Testis (tissue), 5 donors: ENCODE measurements at regions of chr9 and their contacts with region 1.

Region 1: GRCh38 chr9:35116898-35117551 is 1.4 kb upstream of the ATOSB start:
- DNase-seq: peak; percentile 97
- H3K4me3 ChIP-seq: peak overlapping the region; percentile 50 to 65
- H3K27ac ChIP-seq: peak overlapping the region; percentile 69 to 94
- H3K4me1 ChIP-seq: peaks cover 29% of the 10 kb centered on the region
- H3K27me3 ChIP-seq: no peaks in the 10 kb centered on the region
- CTCF ChIP-seq: peak; percentile 79 to 89 (median 82)
- POLR2A ChIP-seq: no peak

Region 2: GRCh38 chr9:34611829-34612630 is 505.0 kb before region 1 on chr9 and contains the start of gene RPP25L:
- intact Hi-C with region 1: no loop called
- DNase-seq: peak; percentile 92
- H3K4me3 ChIP-seq: peak within 1 kb of the TSS; percentile 73 to 76
- H3K27ac ChIP-seq: peak within 1 kb of the TSS; percentile 82 to 92
- H3K4me1 ChIP-seq: peaks cover 11% of the 10 kb centered on the region
- H3K27me3 ChIP-seq: no peaks in the 10 kb centered on the region
- CTCF ChIP-seq: no peak
- POLR2A ChIP-seq: no peak
- total RNA-seq, gene RPP25L: 23.5 to 26.8 TPM

Region 3: DNA sequence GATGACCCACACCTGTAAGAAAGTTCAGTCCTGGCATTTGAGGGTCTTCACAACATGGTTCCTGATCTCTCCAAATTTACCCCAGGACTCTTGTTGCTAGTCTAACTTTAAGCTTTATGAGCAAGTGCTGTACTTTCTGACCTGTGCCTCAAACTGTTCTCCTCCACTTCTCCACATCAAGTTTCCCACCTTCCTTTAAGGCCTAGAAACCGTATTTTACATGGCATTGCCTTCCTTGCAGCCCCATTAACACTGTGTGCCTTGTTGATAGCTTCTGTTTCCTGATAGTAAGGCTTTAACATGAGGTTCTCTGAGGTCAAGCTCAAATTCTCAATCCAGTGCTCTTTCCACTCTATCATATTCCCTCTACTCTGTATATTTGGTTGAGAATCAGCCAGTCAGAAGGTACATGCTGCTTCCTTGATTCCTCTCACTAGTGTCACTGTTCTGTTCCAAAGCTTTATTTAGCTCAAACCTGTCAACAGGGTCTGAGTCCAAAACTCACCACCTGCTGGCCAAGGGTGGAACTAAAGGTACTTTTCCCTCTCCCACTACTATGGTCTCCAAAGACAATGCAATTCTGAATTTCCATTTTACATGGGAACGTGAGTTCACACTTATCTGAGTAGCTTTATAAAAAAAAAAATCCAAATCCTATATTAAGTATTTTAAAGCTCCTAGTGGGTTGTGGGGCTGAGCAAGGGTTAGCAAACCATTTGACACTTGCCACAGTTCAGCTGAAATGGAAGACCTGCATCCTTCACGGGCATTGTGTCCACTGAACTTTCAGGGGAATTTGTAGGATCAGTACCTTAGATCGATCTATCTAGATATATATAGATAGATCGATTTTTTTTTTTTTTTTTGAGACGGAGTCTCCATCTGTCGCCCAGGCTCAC is 65.7 kb before region 1 on chr9:
- intact Hi-C with region 1: no loop called
- DNase-seq: peak; percentile 65
- H3K4me3 ChIP-seq: no peak overlapping the region
- H3K27ac ChIP-seq: no peak overlapping the region
- H3K4me1 ChIP-seq: no peaks in the 10 kb centered on the region
- H3K27me3 ChIP-seq: no peaks in the 10 kb centered on the region
- CTCF ChIP-seq: peak; percentile 38 to 65 (median 64)
- POLR2A ChIP-seq: no peak

Region 4: GRCh38 chr9:35260186-35260585 is 143.2 kb after region 1 on chr9:
- intact Hi-C with region 1: loop called (anchors 5 kb)
- DNase-seq: no peak
- H3K4me3 ChIP-seq: no peak overlapping the region
- H3K27ac ChIP-seq: no peak overlapping the region
- H3K4me1 ChIP-seq: no peaks in the 10 kb centered on the region
- H3K27me3 ChIP-seq: no peaks in the 10 kb centered on the region
- CTCF ChIP-seq: no peak
- POLR2A ChIP-seq: no peak

Region 5: GRCh38 chr9:35470894-35471293 is 353.9 kb after region 1 on chr9:
- intact Hi-C with region 1: loop called (anchors 10 kb)
- DNase-seq: no peak
- H3K4me3 ChIP-seq: no peak overlapping the region
- H3K27ac ChIP-seq: no peak overlapping the region
- H3K4me1 ChIP-seq: no peaks in the 10 kb centered on the region
- H3K27me3 ChIP-seq: no peaks in the 10 kb centered on the region
- CTCF ChIP-seq: no peak
- POLR2A ChIP-seq: no peak

Region 6: DNA sequence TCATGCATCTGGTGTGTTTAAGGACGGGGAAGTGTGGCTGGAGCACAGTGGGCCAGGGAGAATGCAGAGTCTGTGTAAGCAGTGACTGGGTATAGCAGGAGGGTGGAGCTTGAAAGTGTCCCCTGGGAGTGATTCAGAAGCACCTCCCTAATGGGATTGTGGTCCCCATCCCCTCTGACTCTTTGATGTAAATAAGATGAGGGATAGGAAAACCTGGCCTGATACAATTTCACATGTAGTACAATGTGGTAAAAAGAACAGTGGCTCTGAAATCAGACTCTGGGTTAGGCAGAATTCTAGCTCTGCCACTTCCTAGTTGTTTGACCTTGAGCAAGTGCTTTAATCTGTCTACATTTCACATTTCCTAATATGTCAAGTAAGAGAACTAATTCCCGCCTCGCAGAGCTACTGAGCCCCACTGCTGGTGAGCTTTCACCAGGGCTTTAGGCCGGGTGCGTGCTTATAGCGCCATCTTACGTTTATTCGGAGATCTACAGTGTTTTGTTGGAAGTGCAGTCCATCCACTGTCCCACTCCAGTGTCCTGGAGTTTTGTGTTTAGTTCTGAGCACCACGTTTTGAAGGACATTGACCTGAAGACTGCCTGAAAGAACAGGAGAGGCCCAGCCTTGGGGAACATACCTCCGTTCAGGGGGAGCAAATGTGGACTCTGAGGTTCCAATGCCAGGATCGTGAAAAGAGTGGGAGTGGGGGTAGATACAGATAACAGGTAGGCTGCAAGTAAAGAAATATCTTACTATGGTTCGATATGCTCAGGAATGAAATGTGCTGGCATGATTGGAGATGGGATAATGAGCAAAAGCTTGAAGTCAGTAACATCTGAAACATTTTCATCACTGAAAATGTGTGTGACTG is 436.9 kb after region 1 on chr9:
- intact Hi-C with region 1: loop called (anchors 10 kb)
- DNase-seq: peak; percentile 79
- H3K4me3 ChIP-seq: no peak overlapping the region
- H3K27ac ChIP-seq: peak overlapping the region in 1 of 2 donors; percentile 57
- H3K4me1 ChIP-seq: peaks cover 21% of the 10 kb centered on the region
- H3K27me3 ChIP-seq: no peaks in the 10 kb centered on the region
- CTCF ChIP-seq: peak; percentile 74 to 83 (median 79)
- POLR2A ChIP-seq: no peak